ENCODE measurements at regions of chr11 and their contacts with region 1.

Region 1: GRCh38 chr11:113263458-113264259 is 50.7 kb upstream of the TTC12 start:
- DNase-seq: no peak
- H3K4me3 ChIP-seq: no peak overlapping the region
- H3K27ac ChIP-seq: no peak overlapping the region
- H3K4me1 ChIP-seq: peaks cover 0 to 3% (median 0%) of the 10 kb centered on the region in 4 experiments; a peak in 1 of 7 replicates
- H3K27me3 ChIP-seq: no peaks in the 10 kb centered on the region
- CTCF ChIP-seq: no peak
- EP300 ChIP-seq: no peak
- POLR2A ChIP-seq: no peak
- RAD21 ChIP-seq: no peak

Region 2: DNA sequence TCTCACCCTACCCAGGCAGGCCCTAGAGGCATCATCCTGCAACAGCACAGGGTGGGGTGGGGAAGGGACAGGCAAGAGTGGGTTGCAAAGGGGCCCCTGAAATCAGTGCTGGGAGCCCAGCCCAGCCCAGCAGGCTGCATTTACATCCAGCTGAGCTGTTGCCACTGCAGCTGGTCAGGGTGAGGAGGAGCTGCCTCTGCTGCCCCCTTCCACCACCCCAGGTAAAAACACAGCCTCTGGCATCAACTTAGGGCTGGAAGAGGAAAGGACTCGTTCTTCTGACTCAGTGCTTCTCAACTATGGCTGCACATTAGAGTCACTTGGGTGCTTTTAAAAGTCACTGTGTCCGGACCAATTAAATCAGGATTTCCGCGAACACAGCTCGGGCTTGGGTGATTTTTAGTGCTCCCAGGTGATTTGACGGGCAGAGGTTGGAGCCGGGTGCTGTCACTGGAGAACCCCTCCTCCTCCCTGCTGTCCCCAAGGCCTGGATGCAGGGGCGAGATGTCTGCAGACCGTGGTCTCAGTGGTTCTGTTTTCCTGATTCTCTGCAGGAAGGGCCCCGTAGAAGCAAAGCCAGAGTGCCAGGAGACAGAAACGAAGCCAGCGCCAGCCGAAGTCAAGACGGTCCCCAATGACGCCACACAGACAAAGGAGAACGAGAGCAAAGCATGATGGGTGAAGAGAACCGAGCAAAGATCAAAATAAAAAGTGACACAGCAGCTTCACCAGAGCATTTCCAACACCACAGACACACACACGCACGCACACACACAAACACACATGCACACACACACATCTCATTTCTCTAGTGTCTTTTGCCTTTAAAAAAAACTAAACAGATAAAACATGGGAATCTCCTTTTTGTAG is 11.3 kb after region 1 on chr11:
- CTCF ChIA-PET with region 1: interaction called, 14 read pairs
- POLR2A ChIA-PET with region 1: no interaction called
- DNase-seq: peak; percentile 21 to 56
- H3K4me3 ChIP-seq: no peak overlapping the region
- H3K27ac ChIP-seq: no peak overlapping the region
- H3K4me1 ChIP-seq: no peaks in the 10 kb centered on the region
- H3K27me3 ChIP-seq: no peaks in the 10 kb centered on the region
- CTCF ChIP-seq: peak; percentile 46 to 70 (median 70)
- EP300 ChIP-seq: no peak
- POLR2A ChIP-seq: no peak
- RAD21 ChIP-seq: peak; percentile 65 to 71